ENCODE measurements at regions of chr19 and their contacts with region 1.

Region 1: DNA sequence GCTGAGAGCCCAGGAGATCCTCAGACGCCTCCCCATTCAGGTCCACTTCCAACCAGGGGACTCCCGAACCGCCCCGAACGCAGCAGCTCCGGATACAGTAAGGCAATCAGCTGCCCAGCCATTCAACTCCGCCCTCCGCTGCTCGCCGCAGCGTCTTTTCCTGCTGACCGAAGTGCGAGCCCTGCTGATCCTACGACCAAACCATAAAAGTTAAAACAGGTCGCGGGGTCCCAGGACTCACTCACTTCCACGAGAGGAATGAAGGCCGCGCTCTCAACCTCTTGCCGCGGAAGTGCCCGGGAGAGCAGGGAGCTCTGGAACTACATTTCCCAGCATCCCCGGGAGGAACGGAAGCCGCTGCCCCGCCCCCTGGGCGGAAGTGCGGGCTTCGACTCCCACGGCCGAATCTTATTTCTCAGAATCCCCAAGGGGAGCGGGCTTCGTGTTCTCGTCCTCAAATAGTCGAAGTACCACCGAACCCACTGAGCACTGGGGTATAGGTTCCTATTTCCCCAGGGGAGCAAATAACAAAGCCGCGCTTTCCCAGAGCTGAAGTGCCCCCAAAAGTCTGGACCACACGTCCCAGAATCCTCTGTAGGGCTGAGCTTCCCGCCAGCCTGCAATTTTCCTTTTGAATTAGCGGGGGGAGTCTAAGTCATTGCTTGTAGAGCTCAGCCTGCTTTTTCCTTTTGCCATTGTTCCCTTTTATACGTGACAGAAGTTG is at the start of gene ZNF45:
- DNase-seq: peak; percentile 60 to 95
- H3K4me3 ChIP-seq: peak within 1 kb of the TSS; percentile 76 to 93
- H3K27ac ChIP-seq: peak within 1 kb of the TSS; percentile 77 to 82
- H3K4me1 ChIP-seq: peaks cover 4 to 16% of the 10 kb centered on the region in 2 donors
- H3K27me3 ChIP-seq: no peaks in the 10 kb centered on the region
- CTCF ChIP-seq: no peak
- total RNA-seq, gene ZNF45: 6.5 TPM

Region 2: DNA sequence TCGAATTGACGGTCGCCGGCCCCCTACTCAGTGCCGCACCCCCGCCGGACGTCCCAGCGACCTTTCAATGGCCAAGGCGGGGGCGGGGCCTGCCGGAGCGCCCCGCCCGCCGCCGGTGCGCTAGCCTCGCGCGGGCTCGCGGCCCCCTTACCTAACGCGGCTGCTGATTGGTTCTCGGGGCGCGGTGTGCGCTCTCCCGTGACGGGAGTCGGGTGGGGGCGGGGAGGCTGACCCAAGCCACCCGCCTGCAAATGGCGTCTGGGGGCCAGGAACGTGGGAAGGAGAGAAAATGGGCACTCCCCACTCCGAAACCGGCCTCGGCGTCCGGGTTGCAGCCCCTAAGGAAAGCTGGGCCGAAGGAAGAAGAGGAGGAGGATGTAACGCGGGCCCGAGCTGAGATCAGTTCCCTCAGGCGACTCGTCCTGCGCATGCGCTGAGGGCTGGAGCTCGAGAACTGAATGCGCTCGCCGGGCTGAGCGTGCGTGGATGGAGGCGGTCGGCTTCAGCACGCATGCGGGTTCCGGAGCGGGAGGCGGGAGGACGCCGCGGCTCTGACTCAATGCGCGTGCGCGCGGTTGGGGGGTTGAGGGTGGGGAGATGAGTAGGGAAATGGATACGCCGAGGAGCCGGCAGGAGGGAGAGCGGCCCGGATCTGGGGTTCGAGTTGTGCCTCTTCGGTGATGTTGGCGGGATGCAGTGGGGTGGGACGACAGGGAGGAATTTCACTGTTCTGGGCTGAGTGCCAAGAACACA is 180.5 kb before region 1 on chr19 and contains the start of gene SMG9:
- intact Hi-C with region 1: loop called (anchors 10 kb)
- DNase-seq: peak; percentile 87 to 98
- H3K4me3 ChIP-seq: peak within 1 kb of the TSS; percentile 77 to 92
- H3K27ac ChIP-seq: peak within 1 kb of the TSS; percentile 99
- H3K4me1 ChIP-seq: peaks cover 3 to 26% of the 10 kb centered on the region in 2 donors
- H3K27me3 ChIP-seq: no peaks in the 10 kb centered on the region
- CTCF ChIP-seq: no peak
- total RNA-seq, gene SMG9: 126 TPM

Region 3: DNA sequence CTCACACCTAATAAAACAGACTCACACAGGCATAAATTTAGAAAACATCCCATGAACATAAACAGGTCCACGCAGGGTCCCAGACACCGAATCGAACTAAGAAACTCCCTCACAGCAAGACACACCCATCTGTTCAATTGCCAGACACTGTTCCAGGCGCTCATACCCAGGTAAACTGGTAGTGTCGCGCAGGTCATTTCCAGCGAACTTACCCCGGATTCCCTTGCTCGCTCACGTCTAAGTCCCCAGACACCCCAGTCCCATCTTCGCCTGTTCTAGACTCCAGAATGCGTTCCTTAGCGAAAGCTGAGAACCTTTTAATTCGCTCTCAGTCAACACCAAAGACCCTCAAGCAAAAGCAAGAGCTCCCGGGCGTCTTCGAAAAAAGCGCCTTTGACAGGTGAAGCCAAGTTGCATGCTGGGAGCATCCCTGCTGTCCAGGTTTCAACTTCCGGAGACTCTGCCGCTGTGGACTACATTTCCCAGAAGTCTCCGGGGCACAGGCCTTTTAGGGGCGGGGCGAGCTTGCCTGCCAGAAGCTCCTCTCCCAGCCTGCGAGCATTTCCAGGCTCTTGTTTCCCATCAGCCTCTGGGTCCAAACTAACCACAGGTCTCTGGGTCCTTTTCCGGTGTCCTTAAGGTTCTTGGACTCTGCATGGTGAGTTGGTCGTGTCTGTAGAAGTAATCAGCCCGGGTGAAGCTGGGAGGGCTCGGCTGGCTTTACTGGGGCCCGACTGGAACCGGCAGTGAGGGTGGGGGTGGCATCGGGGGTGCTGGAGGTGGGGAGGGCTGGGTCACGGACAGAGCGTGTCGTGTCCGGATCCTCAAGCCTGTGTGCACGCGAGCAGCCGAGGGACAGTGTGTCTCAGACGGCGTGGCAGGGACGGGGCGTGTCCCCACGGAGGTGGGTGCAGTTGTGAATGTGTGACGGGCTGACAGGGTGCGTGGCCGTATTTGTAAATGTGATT is 108.1 kb before region 1 on chr19 and contains the start of gene ZNF283:
- intact Hi-C with region 1: loop called (anchors 1 kb)
- DNase-seq: peak; percentile 60 to 94
- H3K4me3 ChIP-seq: peak within 1 kb of the TSS; percentile 56 to 75
- H3K27ac ChIP-seq: peak within 1 kb of the TSS; percentile 48 to 51
- H3K4me1 ChIP-seq: peaks cover 3 to 10% of the 10 kb centered on the region in 2 donors
- H3K27me3 ChIP-seq: no peaks in the 10 kb centered on the region
- CTCF ChIP-seq: no peak
- total RNA-seq, gene ZNF283: not detected

Region 4: GRCh38 chr19:43950834-43951645 is 15.9 kb after region 1 on chr19 and contains the start of gene ZNF221:
- intact Hi-C with region 1: loop called (anchors 1 kb)
- DNase-seq: peak; percentile 58 to 94
- H3K4me3 ChIP-seq: peak within 1 kb of the TSS; percentile 72 to 88
- H3K27ac ChIP-seq: peak within 1 kb of the TSS; percentile 57 to 73
- H3K4me1 ChIP-seq: no peaks in the 10 kb centered on the region
- H3K27me3 ChIP-seq: no peaks in the 10 kb centered on the region
- CTCF ChIP-seq: peak; percentile 22 to 52 (median 47)
- total RNA-seq, gene ZNF221: 2.6 TPM

Region 5: GRCh38 chr19:43983912-43984686 is 49.0 kb after region 1 on chr19 and contains the start of gene ZNF155:
- intact Hi-C with region 1: loop called (anchors 5 kb)
- DNase-seq: peak; percentile 77 to 95
- H3K4me3 ChIP-seq: peak within 1 kb of the TSS; percentile 74
- H3K27ac ChIP-seq: peak within 1 kb of the TSS; percentile 72 to 81
- H3K4me1 ChIP-seq: peaks cover 0 to 4% of the 10 kb centered on the region in 2 donors
- H3K27me3 ChIP-seq: no peaks in the 10 kb centered on the region
- CTCF ChIP-seq: no peak
- total RNA-seq, gene ZNF155: not detected

Region 6: DNA sequence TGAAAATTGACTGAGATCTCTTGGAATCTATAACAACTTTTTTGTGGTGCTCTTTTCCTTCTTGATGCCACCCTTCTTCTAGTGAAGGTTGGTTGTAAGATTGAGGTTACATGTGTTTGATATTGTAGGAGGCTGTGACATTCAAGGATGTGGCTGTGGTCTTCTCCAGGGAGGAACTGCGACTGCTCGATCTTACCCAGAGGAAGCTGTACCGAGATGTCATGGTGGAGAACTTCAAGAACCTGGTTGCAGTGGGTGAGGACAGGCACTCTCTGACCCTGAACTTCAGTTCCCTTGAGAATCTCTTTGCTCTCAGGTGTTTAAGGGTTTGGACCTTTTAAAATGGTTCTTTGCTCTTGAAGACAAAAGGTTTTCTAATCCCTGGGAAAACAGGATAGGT is 293.2 kb after region 1 on chr19:
- intact Hi-C with region 1: no loop called
- DNase-seq: no peak
- H3K4me3 ChIP-seq: no peak overlapping the region
- H3K27ac ChIP-seq: no peak overlapping the region
- H3K4me1 ChIP-seq: no peaks in the 10 kb centered on the region
- H3K27me3 ChIP-seq: no peaks in the 10 kb centered on the region
- CTCF ChIP-seq: no peak

Measured in ascending aorta (tissue), 2 donors.